Caco-2 (cell line): ENCODE measurements at regions of chr4 and their contacts with region 1.

Region 1: GRCh38 chr4:86947501-86948120 is 12.8 kb downstream of the AFF1 start:
- DNase-seq: no peak
- H3K4me3 ChIP-seq: no peak overlapping the region
- H3K4me3 Mint-ChIP-seq: no peak overlapping the region
- H3K27ac Mint-ChIP-seq: no peak overlapping the region
- H3K4me1 ChIP-seq: peaks cover 3% of the 10 kb centered on the region
- H3K4me1 Mint-ChIP-seq: peaks cover 8% of the 10 kb centered on the region
- H3K27me3 ChIP-seq: no peaks in the 10 kb centered on the region
- H3K27me3 Mint-ChIP-seq: no peaks in the 10 kb centered on the region
- CTCF ChIP-seq: no peak

Region 2: GRCh38 chr4:86961605-86962295 is 14.1 kb after region 1 on chr4:
- CTCF ChIA-PET with region 1: no interaction called
- POLR2A ChIA-PET with region 1: no interaction called
- intact Hi-C with region 1: loop called (anchors 2 kb)
- DNase-seq: no peak
- H3K4me3 ChIP-seq: no peak overlapping the region
- H3K4me3 Mint-ChIP-seq: no peak overlapping the region
- H3K27ac Mint-ChIP-seq: no peak overlapping the region
- H3K4me1 ChIP-seq: peaks cover 28% of the 10 kb centered on the region
- H3K4me1 Mint-ChIP-seq: peaks cover 14% of the 10 kb centered on the region
- H3K27me3 ChIP-seq: no peaks in the 10 kb centered on the region
- H3K27me3 Mint-ChIP-seq: no peaks in the 10 kb centered on the region
- CTCF ChIP-seq: no peak